Cardiac septum (tissue), 1 donor: ENCODE measurements at regions of chr19 and their contacts with region 1.

Region 1: GRCh38 chr19:52897144-52897935 is at the start of gene ZNF320:
- DNase-seq: peak; percentile 97
- total RNA-seq, gene ZNF320: 9.2 TPM

Region 2: GRCh38 chr19:52962394-52963246 is 65.3 kb after region 1 on chr19 and contains the start of gene ZNF816:
- intact Hi-C with region 1: loop called (anchors 2 kb)
- DNase-seq: peak; percentile 98
- total RNA-seq, gene ZNF816: 5.2 TPM